ENCODE measurements at regions of chr3 and their contacts with region 1.

Region 1: DNA sequence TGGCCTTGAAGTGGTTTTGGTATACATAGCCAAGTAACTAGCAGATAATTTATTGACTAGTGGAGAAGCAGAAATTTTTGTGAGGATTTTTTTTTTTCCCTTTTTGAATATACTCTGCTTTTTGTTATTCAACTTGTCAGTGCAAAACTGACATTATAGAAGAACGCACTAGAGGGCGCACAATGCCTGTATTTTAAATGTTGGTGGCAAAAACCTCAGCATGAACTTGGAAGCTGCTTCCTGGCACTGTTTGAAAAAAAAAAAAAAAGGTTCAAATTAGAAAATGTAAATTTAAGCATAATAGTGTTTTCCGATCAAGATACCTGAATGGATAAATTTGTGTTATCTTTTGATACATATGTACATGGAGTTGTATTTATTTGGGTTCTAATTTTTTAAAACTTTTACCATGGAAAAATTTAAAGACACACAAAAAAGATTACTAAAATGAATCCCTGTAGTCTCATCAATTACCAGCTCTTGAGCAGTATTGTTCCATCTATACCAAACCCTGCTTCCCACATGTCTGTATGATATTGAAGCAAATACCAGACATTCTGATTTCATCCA is 56.0 kb downstream of the SLC25A26 start:
- DNase-seq: peak; percentile 42 to 84 (median 64)
- ATAC-seq: peak; percentile 71
- H3K4me3 ChIP-seq: no peak overlapping the region
- H3K4me3 Mint-ChIP-seq: no peak overlapping the region
- H3K27ac ChIP-seq: no peak overlapping the region
- H3K27ac Mint-ChIP-seq: peak overlapping the region; percentile 34
- H3K4me1 ChIP-seq: peaks cover 10% of the 10 kb centered on the region
- H3K4me1 Mint-ChIP-seq: peaks cover 37% of the 10 kb centered on the region
- H3K27me3 ChIP-seq: no peaks in the 10 kb centered on the region
- H3K27me3 Mint-ChIP-seq: no peaks in the 10 kb centered on the region
- CTCF ChIP-seq: peak; percentile 80

Region 2: GRCh38 chr3:66220602-66221377 is 56.0 kb before region 1 on chr3 and contains the start of gene SLC25A26:
- CTCF ChIA-PET with region 1: no interaction called
- POLR2A ChIA-PET with region 1: no interaction called
- intact Hi-C with region 1: no loop called
- DNase-seq: peak; percentile 94 to 99 (median 97)
- ATAC-seq: peak; percentile 98
- H3K4me3 ChIP-seq: peak within 1 kb of the TSS; percentile 73 to 91
- H3K4me3 Mint-ChIP-seq: peak within 1 kb of the TSS; percentile 90
- H3K27ac ChIP-seq: peak within 1 kb of the TSS; percentile 58 to 82
- H3K27ac Mint-ChIP-seq: peak within 1 kb of the TSS; percentile 90
- H3K4me1 ChIP-seq: peaks cover 14% of the 10 kb centered on the region
- H3K4me1 Mint-ChIP-seq: peaks cover 35% of the 10 kb centered on the region
- H3K27me3 ChIP-seq: no peaks in the 10 kb centered on the region
- H3K27me3 Mint-ChIP-seq: peaks cover 3% of the 10 kb centered on the region
- CTCF ChIP-seq: no peak
- total RNA-seq, gene SLC25A26: 32.0 to 37.4 TPM

Region 3: GRCh38 chr3:66302288-66302687 is 25.5 kb after region 1 on chr3:
- CTCF ChIA-PET with region 1: interaction called, 11 read pairs
- POLR2A ChIA-PET with region 1: no interaction called
- intact Hi-C with region 1: loop called in 1 of 2 experiments (anchors 2 kb)
- DNase-seq: peak in 7 of 9 experiments; percentile 37 to 90 (median 55)
- ATAC-seq: peak; percentile 68
- H3K4me3 ChIP-seq: no peak overlapping the region
- H3K4me3 Mint-ChIP-seq: peak overlapping the region; percentile 10
- H3K27ac ChIP-seq: peak overlapping the region; percentile 69 to 97
- H3K27ac Mint-ChIP-seq: peak overlapping the region; percentile 95
- H3K4me1 ChIP-seq: peaks cover 55% of the 10 kb centered on the region
- H3K4me1 Mint-ChIP-seq: peaks cover 81% of the 10 kb centered on the region
- H3K27me3 ChIP-seq: no peaks in the 10 kb centered on the region
- H3K27me3 Mint-ChIP-seq: no peaks in the 10 kb centered on the region
- CTCF ChIP-seq: no peak

Region 4: GRCh38 chr3:66378256-66378823 is 101.5 kb after region 1 on chr3:
- CTCF ChIA-PET with region 1: interaction called, 41 read pairs
- POLR2A ChIA-PET with region 1: interaction called, 3 read pairs
- intact Hi-C with region 1: loop called in 1 of 2 experiments (anchors 2 kb)
- DNase-seq: peak in 7 of 9 experiments; percentile 15 to 67 (median 46)
- ATAC-seq: peak; percentile 61
- H3K4me3 ChIP-seq: no peak overlapping the region
- H3K4me3 Mint-ChIP-seq: no peak overlapping the region
- H3K27ac ChIP-seq: peak overlapping the region in 1 of 2 experiments; percentile 37
- H3K27ac Mint-ChIP-seq: peak overlapping the region; percentile 86
- H3K4me1 ChIP-seq: no peaks in the 10 kb centered on the region
- H3K4me1 Mint-ChIP-seq: peaks cover 7% of the 10 kb centered on the region
- H3K27me3 ChIP-seq: no peaks in the 10 kb centered on the region
- H3K27me3 Mint-ChIP-seq: no peaks in the 10 kb centered on the region
- CTCF ChIP-seq: peak; percentile 56

Region 5: DNA sequence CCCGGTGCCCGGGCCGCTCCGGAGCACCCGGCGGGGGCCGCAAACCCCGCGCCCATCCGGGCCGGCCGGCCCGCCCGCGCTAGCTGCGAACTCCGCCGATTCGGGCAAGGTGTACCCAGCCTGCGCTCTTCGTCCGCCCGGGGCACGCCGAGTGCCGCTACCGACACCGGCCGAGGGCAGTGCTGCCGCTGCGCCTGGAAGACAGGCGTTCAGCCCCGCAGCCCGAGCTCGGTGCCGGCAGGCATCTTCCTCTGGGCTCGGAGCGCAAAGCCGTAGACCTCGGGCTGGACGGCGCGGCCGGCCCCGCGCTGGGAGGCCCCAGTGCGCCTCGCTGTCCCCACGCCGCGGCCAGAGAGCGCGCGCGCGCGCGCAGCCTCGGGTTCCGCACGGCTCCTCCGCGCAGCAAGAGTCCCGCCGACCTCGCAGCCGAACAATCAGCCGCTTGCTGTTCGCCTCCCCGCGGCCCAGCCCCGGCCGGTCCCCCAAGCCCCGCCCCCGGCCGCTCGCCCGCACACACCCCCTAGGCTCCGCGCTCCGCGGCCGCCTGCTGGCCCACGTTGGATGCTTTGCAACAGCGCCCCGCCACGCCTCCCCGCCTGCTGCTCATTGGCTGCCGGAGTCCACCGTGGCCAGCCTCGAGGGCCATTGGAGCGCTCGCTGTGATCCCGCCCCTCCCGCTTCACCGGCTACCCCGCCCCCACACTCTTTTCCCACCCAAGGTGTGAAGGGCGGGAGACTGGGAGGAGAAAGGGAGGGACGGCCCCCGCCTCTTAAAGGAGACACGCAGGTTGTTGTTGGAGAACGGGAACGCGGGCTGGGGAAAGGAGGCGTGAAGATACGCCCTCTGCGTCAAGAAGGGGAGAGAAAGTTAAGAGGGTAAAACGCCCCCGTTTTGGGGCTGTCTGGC is 224.0 kb after region 1 on chr3 and contains the start of gene LRIG1:
- CTCF ChIA-PET with region 1: no interaction called
- POLR2A ChIA-PET with region 1: no interaction called
- intact Hi-C with region 1: loop called in 1 of 2 experiments (anchors 2 kb)
- DNase-seq: peak; percentile 95 to 98 (median 97)
- ATAC-seq: peak; percentile 94
- H3K4me3 ChIP-seq: peak within 1 kb of the TSS; percentile 54 to 66
- H3K4me3 Mint-ChIP-seq: peak within 1 kb of the TSS; percentile 94
- H3K27ac ChIP-seq: peak within 1 kb of the TSS in 1 of 2 experiments; percentile 29
- H3K27ac Mint-ChIP-seq: peak within 1 kb of the TSS; percentile 69
- H3K4me1 ChIP-seq: peaks cover 35% of the 10 kb centered on the region
- H3K4me1 Mint-ChIP-seq: peaks cover 60% of the 10 kb centered on the region
- H3K27me3 ChIP-seq: peaks cover 0 to 4% of the 10 kb centered on the region in 2 experiments
- H3K27me3 Mint-ChIP-seq: peaks cover 8% of the 10 kb centered on the region
- CTCF ChIP-seq: peak; percentile 54
- total RNA-seq, gene LRIG1: 38.2 to 39.4 TPM

Region 6: GRCh38 chr3:66822186-66823008 is 545.6 kb after region 1 on chr3:
- CTCF ChIA-PET with region 1: interaction called, 11 read pairs
- POLR2A ChIA-PET with region 1: interaction called, 3 read pairs
- intact Hi-C with region 1: loop called in 1 of 2 experiments (anchors 1 kb)
- DNase-seq: peak; percentile 40 to 72 (median 67)
- ATAC-seq: peak; percentile 64
- H3K4me3 ChIP-seq: no peak overlapping the region
- H3K4me3 Mint-ChIP-seq: no peak overlapping the region
- H3K27ac ChIP-seq: no peak overlapping the region
- H3K27ac Mint-ChIP-seq: no peak overlapping the region
- H3K4me1 ChIP-seq: no peaks in the 10 kb centered on the region
- H3K4me1 Mint-ChIP-seq: no peaks in the 10 kb centered on the region
- H3K27me3 ChIP-seq: no peaks in the 10 kb centered on the region
- H3K27me3 Mint-ChIP-seq: peaks cover 8% of the 10 kb centered on the region
- CTCF ChIP-seq: peak; percentile 60